ENCODE measurements at regions of chr15 and their contacts with region 1.

Region 1: DNA sequence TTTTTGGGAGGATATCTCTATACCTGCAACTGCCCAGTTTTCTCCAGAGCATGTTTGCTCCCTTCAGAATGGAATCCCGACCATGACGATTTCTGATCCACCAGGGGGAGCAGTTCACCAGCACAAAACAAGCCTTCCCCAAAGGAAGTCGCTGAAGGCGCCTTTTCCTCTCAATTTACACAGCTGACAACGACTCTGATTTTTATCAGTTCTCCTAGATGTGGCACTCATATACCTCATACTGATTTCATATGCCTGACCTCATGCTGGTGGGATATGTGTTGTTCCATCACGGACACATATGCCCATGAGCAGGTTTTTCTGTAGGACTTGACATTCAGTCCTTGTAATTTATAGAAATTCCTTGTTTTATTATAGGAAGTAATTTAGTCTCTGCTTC is 1028.2 kb downstream of the MCTP2 start:
- DNase-seq: peak in 1 of 2 donors; percentile 82
- H3K4me3 ChIP-seq: peak overlapping the region in 1 of 2 donors; percentile 37
- H3K27ac ChIP-seq: peak overlapping the region; percentile 73 to 88
- H3K4me1 ChIP-seq: peaks cover 0 to 29% of the 10 kb centered on the region in 2 donors
- H3K27me3 ChIP-seq: no peaks in the 10 kb centered on the region
- CTCF ChIP-seq: peak; percentile 60 to 81 (median 68)

Region 2: GRCh38 chr15:95025924-95026728 is 233.4 kb before region 1 on chr15:
- intact Hi-C with region 1: loop called (anchors 10 kb)
- DNase-seq: no peak
- H3K4me3 ChIP-seq: no peak overlapping the region
- H3K27ac ChIP-seq: no peak overlapping the region
- H3K4me1 ChIP-seq: no peaks in the 10 kb centered on the region
- H3K27me3 ChIP-seq: no peaks in the 10 kb centered on the region
- CTCF ChIP-seq: peak in 2 of 3 experiments; percentile 41 to 58

Region 3: GRCh38 chr15:95494971-95495541 is 235.5 kb after region 1 on chr15:
- intact Hi-C with region 1: loop called (anchors 10 kb)
- DNase-seq: peak; percentile 10 to 78
- H3K4me3 ChIP-seq: peak overlapping the region in 1 of 2 donors; percentile 31
- H3K27ac ChIP-seq: peak overlapping the region; percentile 75 to 85
- H3K4me1 ChIP-seq: peaks cover 0 to 5% of the 10 kb centered on the region in 2 donors
- H3K27me3 ChIP-seq: no peaks in the 10 kb centered on the region
- CTCF ChIP-seq: no peak

Region 4: DNA sequence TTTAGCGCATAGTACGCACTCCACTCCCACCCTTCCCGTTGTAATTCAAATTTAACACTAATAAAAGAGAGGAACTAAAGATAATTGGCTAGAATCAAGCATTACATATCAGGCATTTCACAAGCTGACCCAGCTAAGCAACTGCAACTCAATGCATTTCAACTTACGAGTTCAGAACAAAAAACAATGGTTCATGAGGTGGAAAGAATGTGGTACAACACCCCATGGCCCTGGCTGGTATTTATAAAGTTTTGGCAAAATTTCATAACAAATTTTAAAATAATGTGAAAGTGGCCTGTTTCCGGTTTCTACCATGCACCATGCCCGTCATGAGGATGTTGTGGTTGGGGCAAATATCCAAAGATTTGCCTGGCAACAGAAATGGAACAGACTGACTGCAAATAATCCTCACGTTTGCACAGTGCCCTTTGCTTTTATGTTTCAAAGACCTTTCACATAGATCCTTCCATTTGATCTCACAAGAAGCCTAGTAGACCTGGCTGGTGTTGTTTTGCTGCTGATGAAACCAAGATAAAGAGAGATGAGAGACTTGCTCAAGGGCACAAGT is 615.7 kb after region 1 on chr15:
- intact Hi-C with region 1: loop called (anchors 10 kb)
- DNase-seq: peak; percentile 18 to 89
- H3K4me3 ChIP-seq: no peak overlapping the region
- H3K27ac ChIP-seq: peak overlapping the region; percentile 74 to 76
- H3K4me1 ChIP-seq: peaks cover 3 to 4% of the 10 kb centered on the region in 2 donors
- H3K27me3 ChIP-seq: no peaks in the 10 kb centered on the region
- CTCF ChIP-seq: no peak

Region 5: DNA sequence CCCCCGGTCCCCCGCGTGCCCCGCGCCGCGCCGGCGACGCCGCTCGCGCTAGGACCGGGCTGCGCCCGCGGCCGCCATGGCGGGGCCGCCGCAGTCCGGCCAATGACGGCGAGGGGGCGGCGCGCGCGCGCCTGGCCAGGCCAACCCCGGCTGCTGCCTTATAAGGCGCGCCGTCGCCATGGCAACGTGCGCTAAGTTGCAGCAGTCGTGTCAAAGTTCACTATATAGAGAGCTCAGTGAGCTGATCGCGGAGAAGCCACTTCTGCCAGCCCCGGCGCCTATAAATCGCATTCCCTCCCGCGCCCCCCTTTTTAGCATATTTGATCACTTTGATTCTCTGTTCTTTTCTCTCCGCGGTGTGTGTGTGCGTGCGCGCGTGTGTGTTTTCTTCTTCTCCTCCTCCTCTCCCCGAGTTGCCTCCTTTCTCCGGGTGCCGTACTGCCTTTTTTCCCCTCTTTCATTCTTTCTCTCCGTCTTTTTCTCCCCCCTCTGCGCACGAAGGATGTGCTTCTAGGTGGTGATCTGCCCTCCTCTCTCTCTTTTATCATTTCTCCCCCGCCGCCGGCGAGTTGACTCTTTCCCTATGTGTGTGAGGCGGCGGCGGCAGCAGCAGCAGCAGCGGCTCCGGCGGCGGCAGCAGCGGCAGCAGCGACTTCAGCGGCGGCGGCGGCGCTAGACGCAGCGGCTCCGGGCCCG is 1071.1 kb after region 1 on chr15 and contains the start of gene NR2F2:
- intact Hi-C with region 1: loop called (anchors 5 kb)
- DNase-seq: peak; percentile 90 to 97
- H3K4me3 ChIP-seq: peak within 1 kb of the TSS; percentile 95
- H3K27ac ChIP-seq: peak within 1 kb of the TSS; percentile 91
- H3K4me1 ChIP-seq: peaks cover 0 to 13% of the 10 kb centered on the region in 2 donors
- H3K27me3 ChIP-seq: no peaks in the 10 kb centered on the region
- CTCF ChIP-seq: no peak
- total RNA-seq, gene NR2F2: 126 TPM

Region 6: DNA sequence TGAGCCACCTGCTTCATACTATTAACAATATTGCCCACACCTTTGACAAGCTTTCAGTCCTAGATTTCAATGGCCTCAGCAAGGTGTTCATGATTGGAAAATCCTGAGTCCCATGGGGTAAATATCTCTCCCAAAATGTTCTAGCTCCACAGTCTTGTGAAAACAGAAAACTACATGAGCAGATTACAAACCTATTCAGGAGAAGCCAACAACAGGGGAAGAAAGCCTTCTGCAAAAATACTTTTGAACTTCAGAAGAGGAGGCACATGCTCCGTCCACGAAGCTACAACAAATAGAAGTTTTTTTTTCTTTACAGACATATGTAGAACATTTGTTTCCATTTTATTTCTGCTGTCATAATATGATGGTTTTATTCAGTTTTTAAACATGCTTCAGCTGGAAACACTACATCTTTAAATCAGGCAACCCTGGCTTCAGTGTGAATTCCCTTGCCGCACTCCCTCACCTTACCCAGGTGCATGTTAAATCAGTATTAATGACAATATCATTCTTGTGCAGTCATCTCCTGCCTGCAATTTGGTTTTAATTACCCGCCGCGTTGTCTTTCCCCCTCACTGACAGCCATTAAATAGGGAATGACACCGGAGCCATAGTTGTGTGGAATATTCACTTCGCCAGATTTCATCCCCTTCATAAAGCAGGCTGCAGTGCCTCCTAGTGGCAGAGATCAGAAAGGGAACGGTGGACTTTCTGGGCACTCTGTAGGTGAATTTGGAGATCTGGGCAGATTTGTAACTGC is 1975.5 kb after region 1 on chr15:
- intact Hi-C with region 1: loop called (anchors 10 kb)
- DNase-seq: no peak
- H3K4me3 ChIP-seq: no peak overlapping the region
- H3K27ac ChIP-seq: no peak overlapping the region
- H3K4me1 ChIP-seq: no peaks in the 10 kb centered on the region
- H3K27me3 ChIP-seq: no peaks in the 10 kb centered on the region
- CTCF ChIP-seq: peak; percentile 44 to 70 (median 70)